ENCODE measurements at regions of chr12 and their contacts with region 1.

Region 1: DNA sequence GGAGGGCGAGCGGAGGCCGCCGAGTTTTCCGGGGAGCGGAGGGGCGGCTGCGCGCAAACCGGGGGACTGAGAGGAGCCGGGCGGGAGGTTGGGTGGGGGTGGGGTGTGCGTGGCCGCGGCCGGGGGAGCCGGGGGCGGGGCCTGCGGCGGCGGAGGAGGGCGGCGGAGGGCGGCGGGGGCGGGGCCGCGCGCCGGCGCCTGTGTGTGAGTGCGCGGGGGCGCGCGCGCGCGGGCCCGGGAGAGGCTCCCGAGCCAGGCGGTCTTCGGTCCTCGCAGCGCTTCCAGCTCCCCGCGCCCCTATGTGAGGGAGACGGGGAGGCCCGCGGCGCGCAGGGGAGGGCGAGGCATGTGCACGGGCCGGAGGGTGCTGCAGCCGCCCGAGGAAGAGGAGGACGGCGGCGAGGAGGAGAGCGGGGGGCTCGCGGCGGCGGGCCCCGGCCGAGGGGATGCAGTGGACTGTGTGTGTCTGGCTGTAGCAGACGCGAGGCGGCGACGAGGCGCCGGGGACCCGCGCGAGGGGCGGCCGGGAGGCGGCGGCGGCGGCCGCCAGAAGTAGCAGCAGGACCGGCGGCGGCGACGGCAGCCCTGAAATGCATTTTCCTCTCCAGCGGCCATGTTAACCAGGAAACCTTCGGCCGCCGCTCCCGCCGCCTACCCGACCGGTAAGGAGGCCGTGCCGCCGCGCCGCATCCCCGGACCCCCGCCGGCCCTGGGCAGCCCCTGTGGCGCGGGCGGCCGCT is at the start of gene DYRK2:
- DNase-seq: peak; percentile 60 to 93 (median 79)
- ATAC-seq: peak; percentile 54
- H3K4me3 ChIP-seq: peak within 1 kb of the TSS; percentile 72
- H3K4me3 Mint-ChIP-seq: peak within 1 kb of the TSS; percentile 94
- H3K27ac ChIP-seq: peak within 1 kb of the TSS; percentile 71 to 85
- H3K27ac Mint-ChIP-seq: peak within 1 kb of the TSS; percentile 94
- H3K4me1 ChIP-seq: peaks cover 31% of the 10 kb centered on the region
- H3K4me1 Mint-ChIP-seq: peaks cover 40% of the 10 kb centered on the region
- H3K27me3 ChIP-seq: no peaks in the 10 kb centered on the region
- H3K27me3 Mint-ChIP-seq: no peaks in the 10 kb centered on the region
- CTCF ChIP-seq: no peak
- total RNA-seq, gene DYRK2: 123 to 135 TPM

Region 2: GRCh38 chr12:67441736-67442346 is 206.8 kb before region 1 on chr12:
- CTCF ChIA-PET with region 1: no interaction called
- POLR2A ChIA-PET with region 1: interaction called, 9 read pairs
- intact Hi-C with region 1: loop called (anchors 5 kb)
- DNase-seq: peak; percentile 64 to 87 (median 74)
- ATAC-seq: peak; percentile 96
- H3K4me3 ChIP-seq: no peak overlapping the region
- H3K4me3 Mint-ChIP-seq: peak overlapping the region; percentile 77
- H3K27ac ChIP-seq: no peak overlapping the region
- H3K27ac Mint-ChIP-seq: peak overlapping the region; percentile 10
- H3K4me1 ChIP-seq: peaks cover 14% of the 10 kb centered on the region
- H3K4me1 Mint-ChIP-seq: peaks cover 32% of the 10 kb centered on the region
- H3K27me3 ChIP-seq: no peaks in the 10 kb centered on the region
- H3K27me3 Mint-ChIP-seq: no peaks in the 10 kb centered on the region
- CTCF ChIP-seq: peak; percentile 84

Region 3: DNA sequence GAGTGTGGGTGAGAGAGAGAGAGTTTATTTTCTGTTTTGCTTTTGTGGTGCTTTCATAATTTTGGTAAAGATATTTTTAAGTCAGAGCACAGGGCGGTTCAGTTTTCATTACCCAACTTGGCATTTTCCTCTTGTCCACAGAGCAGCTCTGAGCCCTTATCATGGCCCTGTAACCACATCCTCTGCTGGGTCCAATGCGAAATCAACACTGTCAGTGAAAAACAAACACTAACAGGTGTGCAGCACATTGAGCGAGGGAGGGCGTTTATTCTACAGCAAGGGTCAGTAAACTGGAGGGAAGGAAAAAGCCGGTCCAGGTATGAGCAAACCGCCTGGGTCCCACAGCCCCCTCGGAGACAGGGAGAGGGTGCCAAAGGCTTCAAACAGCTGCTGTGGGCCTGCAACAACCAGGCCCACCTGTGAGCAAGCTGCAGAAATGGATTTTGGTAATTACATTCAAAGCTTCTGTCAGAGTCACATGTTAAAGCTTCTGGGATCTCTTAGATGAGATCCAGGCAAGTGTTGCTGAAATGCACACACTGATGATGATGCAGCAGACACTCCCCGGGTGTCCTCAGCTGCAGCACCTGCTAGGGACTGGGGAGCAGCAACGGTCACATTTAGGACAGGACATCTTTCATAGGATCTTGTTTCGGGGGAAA is 132.9 kb before region 1 on chr12:
- CTCF ChIA-PET with region 1: no interaction called
- POLR2A ChIA-PET with region 1: interaction called, 36 read pairs
- intact Hi-C with region 1: no loop called
- DNase-seq: peak in 11 of 14 experiments; percentile 5 to 88 (median 30)
- ATAC-seq: peak; percentile 88
- H3K4me3 ChIP-seq: peak overlapping the region; percentile 11
- H3K4me3 Mint-ChIP-seq: peak overlapping the region; percentile 34
- H3K27ac ChIP-seq: peak overlapping the region in 1 of 2 donors; percentile 1
- H3K27ac Mint-ChIP-seq: peak overlapping the region; percentile 57
- H3K4me1 ChIP-seq: peaks cover 52% of the 10 kb centered on the region
- H3K4me1 Mint-ChIP-seq: peaks cover 56% of the 10 kb centered on the region
- H3K27me3 ChIP-seq: no peaks in the 10 kb centered on the region
- H3K27me3 Mint-ChIP-seq: no peaks in the 10 kb centered on the region
- CTCF ChIP-seq: no peak

Region 4: GRCh38 chr12:67592216-67593011 is 56.3 kb before region 1 on chr12:
- CTCF ChIA-PET with region 1: interaction called, 4 read pairs
- POLR2A ChIA-PET with region 1: interaction called, 20 read pairs
- intact Hi-C with region 1: loop called in 1 of 2 experiments (anchors 2 kb)
- DNase-seq: peak in 4 of 14 experiments; percentile 15 to 85 (median 48)
- ATAC-seq: no peak
- H3K4me3 ChIP-seq: no peak overlapping the region
- H3K4me3 Mint-ChIP-seq: peak overlapping the region; percentile 32
- H3K27ac ChIP-seq: peak overlapping the region in 1 of 2 donors; percentile 35
- H3K27ac Mint-ChIP-seq: peak overlapping the region; percentile 60
- H3K4me1 ChIP-seq: peaks cover 40% of the 10 kb centered on the region
- H3K4me1 Mint-ChIP-seq: peaks cover 68% of the 10 kb centered on the region
- H3K27me3 ChIP-seq: no peaks in the 10 kb centered on the region
- H3K27me3 Mint-ChIP-seq: no peaks in the 10 kb centered on the region
- CTCF ChIP-seq: no peak

Region 5: GRCh38 chr12:67661311-67662021 is 12.8 kb after region 1 on chr12:
- CTCF ChIA-PET with region 1: interaction called, 3 read pairs
- POLR2A ChIA-PET with region 1: interaction called, 12 read pairs
- intact Hi-C with region 1: no loop called
- DNase-seq: no peak
- ATAC-seq: no peak
- H3K4me3 ChIP-seq: no peak overlapping the region
- H3K4me3 Mint-ChIP-seq: peak overlapping the region; percentile 46
- H3K27ac ChIP-seq: no peak overlapping the region
- H3K27ac Mint-ChIP-seq: peak overlapping the region; percentile 24
- H3K4me1 ChIP-seq: peaks cover 30% of the 10 kb centered on the region
- H3K4me1 Mint-ChIP-seq: peaks cover 94% of the 10 kb centered on the region
- H3K27me3 ChIP-seq: no peaks in the 10 kb centered on the region
- H3K27me3 Mint-ChIP-seq: no peaks in the 10 kb centered on the region
- CTCF ChIP-seq: no peak

Region 6: GRCh38 chr12:67705394-67706370 is 57.0 kb after region 1 on chr12:
- CTCF ChIA-PET with region 1: no interaction called
- POLR2A ChIA-PET with region 1: no interaction called
- intact Hi-C with region 1: no loop called
- DNase-seq: no peak
- ATAC-seq: no peak
- H3K4me3 ChIP-seq: no peak overlapping the region
- H3K4me3 Mint-ChIP-seq: no peak overlapping the region
- H3K27ac ChIP-seq: no peak overlapping the region
- H3K27ac Mint-ChIP-seq: no peak overlapping the region
- H3K4me1 ChIP-seq: no peaks in the 10 kb centered on the region
- H3K4me1 Mint-ChIP-seq: peaks cover 5% of the 10 kb centered on the region
- H3K27me3 ChIP-seq: no peaks in the 10 kb centered on the region
- H3K27me3 Mint-ChIP-seq: no peaks in the 10 kb centered on the region
- CTCF ChIP-seq: no peak

Region 7: GRCh38 chr12:67943226-67943892 is 294.7 kb after region 1 on chr12:
- CTCF ChIA-PET with region 1: no interaction called
- POLR2A ChIA-PET with region 1: interaction called, 7 read pairs
- intact Hi-C with region 1: loop called (anchors 1 to 5 kb)
- DNase-seq: peak; percentile 4 to 81 (median 56)
- ATAC-seq: peak; percentile 78
- H3K4me3 ChIP-seq: no peak overlapping the region
- H3K4me3 Mint-ChIP-seq: no peak overlapping the region
- H3K27ac ChIP-seq: no peak overlapping the region
- H3K27ac Mint-ChIP-seq: no peak overlapping the region
- H3K4me1 ChIP-seq: no peaks in the 10 kb centered on the region
- H3K4me1 Mint-ChIP-seq: no peaks in the 10 kb centered on the region
- H3K27me3 ChIP-seq: no peaks in the 10 kb centered on the region
- H3K27me3 Mint-ChIP-seq: peaks cover 4% of the 10 kb centered on the region
- CTCF ChIP-seq: peak; percentile 87

Region 8: DNA sequence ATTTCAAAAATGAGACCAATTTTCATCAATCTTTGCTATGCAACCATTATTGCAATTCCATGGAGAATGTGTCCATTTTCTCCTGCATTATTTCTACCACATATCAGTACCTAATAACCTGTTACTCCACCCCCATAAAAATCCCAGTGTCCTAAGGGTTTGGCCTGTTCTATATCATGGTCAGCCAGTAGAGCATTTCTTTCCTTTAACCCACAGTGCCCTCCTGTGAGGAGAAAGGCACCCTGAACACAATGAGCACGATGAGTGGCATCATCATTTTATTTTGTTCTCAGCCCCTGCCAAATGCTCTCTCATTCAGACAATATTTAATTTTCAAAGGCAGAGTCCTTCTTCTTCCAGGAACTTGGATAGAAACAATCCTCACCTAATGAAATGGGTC is 329.0 kb after region 1 on chr12:
- CTCF ChIA-PET with region 1: no interaction called
- POLR2A ChIA-PET with region 1: no interaction called
- intact Hi-C with region 1: no loop called
- DNase-seq: no peak
- ATAC-seq: no peak
- H3K4me3 ChIP-seq: no peak overlapping the region
- H3K4me3 Mint-ChIP-seq: no peak overlapping the region
- H3K27ac ChIP-seq: no peak overlapping the region
- H3K27ac Mint-ChIP-seq: no peak overlapping the region
- H3K4me1 ChIP-seq: no peaks in the 10 kb centered on the region
- H3K4me1 Mint-ChIP-seq: no peaks in the 10 kb centered on the region
- H3K27me3 ChIP-seq: no peaks in the 10 kb centered on the region
- H3K27me3 Mint-ChIP-seq: peaks cover 4% of the 10 kb centered on the region
- CTCF ChIP-seq: no peak